H1 (cell line): ENCODE measurements at regions of chr6 and their contacts with region 1.

Region 1: DNA sequence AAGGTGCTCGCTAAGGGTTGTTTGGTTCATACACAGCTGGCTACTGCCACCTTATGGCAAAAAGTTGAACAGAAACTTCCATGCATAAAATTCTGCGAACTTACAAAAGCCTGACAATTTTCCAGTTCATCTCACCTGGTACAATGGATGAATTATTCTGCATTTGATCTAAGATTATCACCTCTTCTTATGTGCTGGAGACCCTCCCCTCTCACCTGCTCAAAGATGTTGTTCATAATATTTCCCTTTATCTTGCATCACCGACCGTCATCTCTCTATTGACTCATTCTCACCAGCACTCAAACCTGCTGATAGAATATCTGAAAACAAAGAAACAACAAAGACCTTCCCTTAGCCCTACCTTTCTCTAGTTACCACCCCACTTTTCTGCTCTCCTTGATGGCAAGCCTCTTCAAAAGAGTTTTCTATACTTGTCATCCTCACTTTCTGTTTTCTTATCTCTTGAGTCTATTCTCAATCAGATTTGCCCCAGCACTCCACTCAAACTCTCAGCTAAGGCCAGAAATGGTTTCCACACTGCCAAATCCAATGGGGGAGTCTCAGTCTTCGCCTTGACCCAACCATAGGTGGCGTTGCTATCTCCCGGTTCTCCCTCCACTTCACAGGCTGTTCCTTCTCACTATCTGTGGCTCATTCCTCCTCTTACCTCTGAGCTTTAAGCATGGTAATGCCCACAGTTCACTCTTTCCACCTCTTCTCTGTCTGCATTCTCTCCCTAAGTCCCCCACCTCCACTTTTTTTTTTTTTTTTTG is 25.8 kb downstream of the SNRNP48 start:
- DNase-seq: peak in 1 of 2 experiments; percentile 58
- H3K4me3 ChIP-seq: no peak overlapping the region
- H3K27ac ChIP-seq: no peak overlapping the region
- H3K4me1 ChIP-seq: no peaks in the 10 kb centered on the region
- H3K27me3 ChIP-seq: no peaks in the 10 kb centered on the region
- CTCF ChIP-seq: peak; percentile 58 to 73 (median 72)
- EP300 ChIP-seq: no peak
- POLR2A ChIP-seq: no peak
- RAD21 ChIP-seq: peak; percentile 85 to 88

Region 2: DNA sequence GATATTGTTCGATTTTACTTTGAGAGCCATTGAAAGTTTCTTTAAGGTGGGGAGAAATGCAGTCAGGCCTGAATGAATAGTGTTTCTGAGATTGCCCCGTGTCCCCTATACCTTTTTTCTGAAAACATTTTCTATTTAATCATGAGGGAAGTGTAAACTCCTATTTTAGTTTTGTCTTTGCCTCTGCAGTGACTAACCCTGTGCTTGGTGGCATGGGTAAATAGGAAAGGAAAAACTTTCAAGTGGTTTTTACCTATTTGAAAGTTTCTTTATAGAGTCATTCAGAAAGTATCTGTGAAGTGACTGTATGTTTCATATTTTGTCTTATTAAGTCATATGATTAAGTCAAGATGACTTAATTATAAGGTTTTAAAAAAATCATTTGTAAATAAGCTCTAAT is 11.3 kb before region 1 on chr6:
- CTCF ChIA-PET with region 1: interaction called, 12 read pairs
- POLR2A ChIA-PET with region 1: no interaction called
- DNase-seq: no peak
- H3K4me3 ChIP-seq: no peak overlapping the region
- H3K27ac ChIP-seq: no peak overlapping the region
- H3K4me1 ChIP-seq: no peaks in the 10 kb centered on the region
- H3K27me3 ChIP-seq: no peaks in the 10 kb centered on the region
- CTCF ChIP-seq: no peak
- EP300 ChIP-seq: no peak
- POLR2A ChIP-seq: no peak
- RAD21 ChIP-seq: no peak

Region 3: GRCh38 chr6:7697820-7698623 is 82.2 kb after region 1 on chr6:
- CTCF ChIA-PET with region 1: no interaction called
- POLR2A ChIA-PET with region 1: no interaction called
- DNase-seq: no peak
- H3K4me3 ChIP-seq: no peak overlapping the region
- H3K27ac ChIP-seq: no peak overlapping the region
- H3K4me1 ChIP-seq: peaks cover 0 to 5% (median 0%) of the 10 kb centered on the region in 4 experiments; a peak in 2 of 7 replicates
- H3K27me3 ChIP-seq: no peaks in the 10 kb centered on the region
- CTCF ChIP-seq: no peak
- EP300 ChIP-seq: no peak
- POLR2A ChIP-seq: no peak
- RAD21 ChIP-seq: no peak